Endothelial cell of umbilical vein (primary cell): ENCODE measurements at regions of chr2 and their contacts with region 1.

Region 1: DNA sequence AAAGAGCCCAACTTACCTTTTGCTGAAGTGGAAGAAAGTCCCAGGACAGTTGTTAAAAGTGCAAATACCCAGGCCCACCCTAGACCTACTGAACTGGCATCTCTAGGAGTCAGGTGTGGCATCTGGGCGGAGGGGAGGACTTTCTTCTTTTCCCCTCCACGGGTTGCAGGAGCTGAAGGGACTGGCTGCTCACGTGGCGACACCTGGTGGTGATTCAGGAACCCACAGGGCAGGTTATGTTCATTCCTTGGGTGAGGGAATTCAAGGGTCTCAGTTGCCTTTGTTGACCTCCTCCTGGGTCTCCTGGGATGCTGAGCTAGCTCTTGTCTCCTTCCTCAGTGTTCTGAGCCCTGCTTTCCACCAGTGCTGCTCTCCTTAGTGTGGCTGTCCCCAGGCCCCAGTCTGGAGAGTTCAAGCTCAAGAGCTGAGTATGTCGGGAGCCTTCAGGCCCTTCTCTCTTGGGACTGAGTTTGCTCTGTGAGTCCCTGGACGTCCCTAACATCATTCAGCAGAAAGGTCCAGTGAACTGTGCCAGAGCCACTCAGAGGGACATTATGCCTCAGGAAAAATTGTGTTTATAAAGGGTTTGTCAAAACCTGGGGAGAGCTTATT is 56.9 kb downstream of the DYSF start:
- DNase-seq: peak; percentile 63
- H3K4me3 ChIP-seq: no peak overlapping the region
- H3K27ac ChIP-seq: no peak overlapping the region
- H3K4me1 ChIP-seq: peaks cover 8% of the 10 kb centered on the region
- H3K27me3 ChIP-seq: no peaks in the 10 kb centered on the region
- CTCF ChIP-seq: peak; percentile 89 to 90
- POLR2A ChIP-seq: no peak

Region 2: DNA sequence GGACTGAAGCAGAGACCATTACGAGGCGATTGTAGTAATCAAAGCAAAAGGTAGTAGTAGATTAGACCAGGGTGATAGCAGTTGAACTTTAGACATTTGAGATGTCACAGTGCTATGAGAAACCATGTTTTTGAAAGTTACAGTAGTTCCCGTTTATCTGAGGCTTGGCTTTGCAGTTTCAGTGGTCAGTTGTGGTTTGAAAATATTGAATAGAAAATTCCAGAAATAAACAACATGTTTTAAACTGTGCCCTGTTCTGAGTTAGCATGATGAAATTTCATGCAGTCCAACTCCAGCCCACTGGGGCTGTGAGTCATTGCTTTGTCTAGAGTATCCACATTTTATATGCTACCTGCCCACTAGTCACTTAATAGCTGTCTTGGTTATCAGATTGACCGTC is 131.2 kb before region 1 on chr2:
- CTCF ChIA-PET with region 1: no interaction called
- POLR2A ChIA-PET with region 1: no interaction called
- dilution Hi-C with region 1: no loop called
- intact Hi-C with region 1: loop called (anchors 10 kb)
- DNase-seq: no peak
- H3K4me3 ChIP-seq: no peak overlapping the region
- H3K27ac ChIP-seq: no peak overlapping the region
- H3K4me1 ChIP-seq: no peaks in the 10 kb centered on the region
- H3K27me3 ChIP-seq: no peaks in the 10 kb centered on the region
- CTCF ChIP-seq: no peak
- POLR2A ChIP-seq: no peak

Region 3: DNA sequence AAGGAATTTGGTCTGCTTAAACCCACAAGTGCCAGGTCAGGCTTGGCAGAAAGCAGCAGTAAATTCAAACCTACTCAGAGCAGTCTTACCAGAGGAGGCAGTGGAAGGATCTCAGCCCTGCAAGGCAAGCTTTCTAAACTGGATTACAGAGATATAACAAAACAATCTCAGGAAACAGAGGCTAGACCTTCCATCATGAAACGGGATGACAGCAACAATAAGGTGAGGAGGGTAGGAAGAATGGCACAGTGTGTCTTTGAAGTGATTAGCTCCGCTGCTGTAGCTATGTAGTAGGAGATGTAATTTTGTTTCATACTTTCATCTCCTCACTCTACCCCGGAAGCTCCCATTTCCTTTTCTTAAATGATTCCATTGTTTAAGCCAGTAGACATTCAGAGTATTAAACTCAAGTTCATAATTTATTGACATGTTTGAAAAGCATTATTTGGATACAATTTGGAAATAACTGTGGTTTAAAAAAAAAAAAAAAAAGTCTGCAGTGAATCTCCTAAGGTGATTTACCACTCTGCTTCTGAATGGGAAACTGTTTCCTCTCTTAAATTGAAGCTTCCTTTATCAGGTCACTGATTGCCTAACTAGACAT is 86.4 kb before region 1 on chr2:
- CTCF ChIA-PET with region 1: interaction called, 15 read pairs
- POLR2A ChIA-PET with region 1: no interaction called
- dilution Hi-C with region 1: no loop called
- intact Hi-C with region 1: no loop called
- DNase-seq: peak; percentile 91
- H3K4me3 ChIP-seq: peak overlapping the region in 1 of 3 experiments; percentile 13
- H3K27ac ChIP-seq: peak overlapping the region; percentile 78
- H3K4me1 ChIP-seq: peaks cover 37% of the 10 kb centered on the region
- H3K27me3 ChIP-seq: no peaks in the 10 kb centered on the region
- CTCF ChIP-seq: peak in 1 of 2 donors; percentile 15
- POLR2A ChIP-seq: peak; percentile 52

Region 4: GRCh38 chr2:71452565-71452964 is 57.7 kb before region 1 on chr2:
- CTCF ChIA-PET with region 1: interaction called, 670 read pairs
- POLR2A ChIA-PET with region 1: interaction called, 4 read pairs
- dilution Hi-C with region 1: no loop called
- intact Hi-C with region 1: no loop called
- DNase-seq: peak; percentile 42
- H3K4me3 ChIP-seq: no peak overlapping the region
- H3K27ac ChIP-seq: no peak overlapping the region
- H3K4me1 ChIP-seq: peaks cover 47% of the 10 kb centered on the region
- H3K27me3 ChIP-seq: no peaks in the 10 kb centered on the region
- CTCF ChIP-seq: peak; percentile 31 to 36
- POLR2A ChIP-seq: no peak

Region 5: DNA sequence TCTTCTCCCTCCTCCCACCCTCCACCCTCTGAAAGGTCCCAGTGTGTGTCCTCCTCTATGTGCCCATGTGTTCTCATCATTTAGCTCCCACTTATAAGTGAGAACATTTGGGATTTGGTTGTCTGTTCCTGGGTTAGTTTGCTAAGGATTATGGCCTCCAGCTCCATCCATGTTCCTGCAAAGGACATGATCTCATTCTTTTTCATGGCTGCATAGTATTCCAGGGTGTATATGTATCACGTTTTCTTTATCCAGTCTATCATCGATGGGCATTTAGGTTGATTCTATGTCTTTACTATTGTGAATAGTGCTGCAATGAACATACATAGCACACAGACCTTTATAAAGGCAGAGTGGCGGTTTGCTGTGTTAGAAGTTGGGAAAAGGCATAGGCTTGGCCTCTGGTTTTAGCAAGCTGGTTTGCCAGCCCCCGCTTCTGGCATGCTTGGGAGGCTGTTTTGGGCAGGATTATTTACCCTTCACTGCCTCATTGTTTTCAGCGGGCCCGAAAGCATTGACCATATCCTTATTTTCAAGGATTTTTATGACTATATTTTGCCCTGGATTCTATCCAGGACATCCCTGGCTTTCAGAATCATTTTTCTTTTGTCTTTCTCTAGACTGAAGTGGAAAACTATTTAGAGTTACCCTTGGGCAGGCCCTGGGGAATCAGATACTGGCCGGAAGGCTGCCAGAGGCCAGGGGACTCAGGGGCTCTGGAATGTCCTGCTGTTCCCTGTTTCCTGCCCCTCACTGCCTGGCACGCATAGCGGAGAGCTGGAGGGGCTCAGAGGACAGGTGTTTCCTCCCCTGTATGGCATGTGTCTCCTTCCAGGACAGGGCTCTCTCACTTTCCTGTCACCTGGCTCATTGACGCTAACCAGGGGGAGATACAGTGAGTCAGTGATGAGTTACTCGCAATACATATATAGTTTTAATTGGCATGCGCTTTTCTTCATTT is 18.5 kb before region 1 on chr2:
- CTCF ChIA-PET with region 1: interaction called, 6 read pairs
- POLR2A ChIA-PET with region 1: no interaction called
- dilution Hi-C with region 1: no loop called
- intact Hi-C with region 1: loop called (anchors 1 kb)
- DNase-seq: peak; percentile 98
- H3K4me3 ChIP-seq: no peak overlapping the region
- H3K27ac ChIP-seq: peak overlapping the region; percentile 96
- H3K4me1 ChIP-seq: peaks cover 41% of the 10 kb centered on the region
- H3K27me3 ChIP-seq: no peaks in the 10 kb centered on the region
- CTCF ChIP-seq: no peak
- POLR2A ChIP-seq: peak; percentile 72

Region 6: DNA sequence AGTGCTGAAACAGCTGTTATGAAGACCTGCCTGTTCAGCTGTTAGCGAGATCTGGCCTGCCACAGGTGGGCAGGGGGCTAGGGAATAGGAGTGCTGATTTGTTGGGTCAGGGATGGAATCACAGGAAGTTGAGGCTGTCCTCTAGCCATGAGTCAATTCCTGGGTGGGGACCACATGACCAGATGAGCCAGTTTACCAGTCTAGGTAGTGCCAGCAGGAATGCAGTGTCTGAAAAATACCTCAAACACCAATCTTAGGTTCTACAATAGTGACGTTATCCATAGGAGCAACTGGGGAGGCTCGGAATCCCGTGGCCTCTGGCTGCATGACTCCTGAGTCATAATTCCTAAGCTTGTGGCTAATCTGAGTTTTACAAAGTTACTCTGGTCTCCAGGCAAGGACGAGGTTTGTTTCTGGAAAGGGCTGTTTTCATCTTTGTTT is 12.0 kb before region 1 on chr2:
- CTCF ChIA-PET with region 1: interaction called, 18 read pairs
- POLR2A ChIA-PET with region 1: no interaction called
- dilution Hi-C with region 1: no loop called
- intact Hi-C with region 1: no loop called
- DNase-seq: peak; percentile 72
- H3K4me3 ChIP-seq: no peak overlapping the region
- H3K27ac ChIP-seq: peak overlapping the region; percentile 96
- H3K4me1 ChIP-seq: peaks cover 71% of the 10 kb centered on the region
- H3K27me3 ChIP-seq: no peaks in the 10 kb centered on the region
- CTCF ChIP-seq: no peak
- POLR2A ChIP-seq: no peak